ENCODE measurements at regions of chr3 and their contacts with region 1.

Region 1: GRCh38 chr3:184174646-184175492 is at the start of gene AP2M1:
- DNase-seq: peak; percentile 98
- ATAC-seq: peak; percentile 83
- H3K4me3 Mint-ChIP-seq: peak within 1 kb of the TSS; percentile 97
- H3K27ac Mint-ChIP-seq: peak within 1 kb of the TSS; percentile 98
- H3K4me1 Mint-ChIP-seq: peaks cover 28% of the 10 kb centered on the region
- H3K27me3 Mint-ChIP-seq: no peaks in the 10 kb centered on the region
- CTCF ChIP-seq: no peak
- total RNA-seq, gene AP2M1: 370 to 399 TPM (median 383 TPM) in 3 replicates

Region 2: DNA sequence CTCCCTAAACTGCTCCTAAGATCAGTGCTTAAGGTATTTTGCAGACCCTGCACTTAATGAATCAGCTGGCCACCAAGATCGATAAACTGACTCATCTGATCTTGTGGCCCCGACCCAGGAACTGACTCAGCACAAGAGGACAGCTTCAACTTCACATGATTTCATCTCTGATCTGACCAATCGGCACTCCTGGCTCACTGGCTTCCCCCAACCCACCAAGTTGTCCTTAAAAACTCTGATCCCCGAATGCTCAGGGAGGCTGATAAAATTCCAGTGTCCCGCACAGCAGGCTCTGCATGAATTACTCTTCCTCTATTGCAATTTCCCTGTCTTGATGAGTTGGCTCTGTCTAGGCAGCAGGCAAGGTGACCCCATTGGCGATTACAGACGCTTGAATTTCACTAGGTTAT is 64.5 kb before region 1 on chr3:
- CTCF ChIA-PET with region 1: no interaction called
- POLR2A ChIA-PET with region 1: no interaction called
- DNase-seq: no peak
- ATAC-seq: no peak; the same call in 1 of the 2 replicates
- H3K4me3 Mint-ChIP-seq: no peak overlapping the region
- H3K27ac Mint-ChIP-seq: peak overlapping the region; percentile 4; the same call in 1 of the 2 replicates
- H3K4me1 Mint-ChIP-seq: peaks cover 6% of the 10 kb centered on the region
- H3K27me3 Mint-ChIP-seq: no peaks in the 10 kb centered on the region
- CTCF ChIP-seq: no peak

Region 3: GRCh38 chr3:184154885-184155643 is 19.8 kb before region 1 on chr3 and contains the start of gene DVL3:
- CTCF ChIA-PET with region 1: no interaction called
- POLR2A ChIA-PET with region 1: interaction called, 11 read pairs
- DNase-seq: peak; percentile 67
- ATAC-seq: peak; percentile 77
- H3K4me3 Mint-ChIP-seq: peak within 1 kb of the TSS; percentile 95
- H3K27ac Mint-ChIP-seq: peak within 1 kb of the TSS; percentile 95
- H3K4me1 Mint-ChIP-seq: peaks cover 16% of the 10 kb centered on the region
- H3K27me3 Mint-ChIP-seq: no peaks in the 10 kb centered on the region
- CTCF ChIP-seq: no peak
- total RNA-seq, gene DVL3: 64.5 to 76.2 TPM (median 66.5 TPM) in 3 replicates

Region 4: GRCh38 chr3:184185461-184186308 is 10.8 kb after region 1 on chr3 and contains the start of gene ABCF3:
- CTCF ChIA-PET with region 1: interaction called, 3 read pairs
- POLR2A ChIA-PET with region 1: interaction called, 15 read pairs
- DNase-seq: peak; percentile 99
- ATAC-seq: peak; percentile 89
- H3K4me3 Mint-ChIP-seq: peak within 1 kb of the TSS; percentile 98
- H3K27ac Mint-ChIP-seq: peak within 1 kb of the TSS; percentile 97
- H3K4me1 Mint-ChIP-seq: peaks cover 23% of the 10 kb centered on the region
- H3K27me3 Mint-ChIP-seq: no peaks in the 10 kb centered on the region
- CTCF ChIP-seq: no peak
- total RNA-seq, gene ABCF3: 49.7 to 63.6 TPM (median 50.0 TPM) in 3 replicates